ENCODE measurements at regions of chr1 and their contacts with region 1.

Region 1: GRCh38 chr1:147735423-147735822 is 25.0 kb downstream of the GJA5 start:
- DNase-seq: no peak
- ATAC-seq: no peak
- H3K4me3 ChIP-seq: no peak overlapping the region
- H3K27ac ChIP-seq: no peak overlapping the region
- H3K4me1 ChIP-seq: no peaks in the 10 kb centered on the region
- H3K27me3 ChIP-seq: no peaks in the 10 kb centered on the region
- CTCF ChIP-seq: no peak
- POLR2A ChIP-seq: no peak

Region 2: DNA sequence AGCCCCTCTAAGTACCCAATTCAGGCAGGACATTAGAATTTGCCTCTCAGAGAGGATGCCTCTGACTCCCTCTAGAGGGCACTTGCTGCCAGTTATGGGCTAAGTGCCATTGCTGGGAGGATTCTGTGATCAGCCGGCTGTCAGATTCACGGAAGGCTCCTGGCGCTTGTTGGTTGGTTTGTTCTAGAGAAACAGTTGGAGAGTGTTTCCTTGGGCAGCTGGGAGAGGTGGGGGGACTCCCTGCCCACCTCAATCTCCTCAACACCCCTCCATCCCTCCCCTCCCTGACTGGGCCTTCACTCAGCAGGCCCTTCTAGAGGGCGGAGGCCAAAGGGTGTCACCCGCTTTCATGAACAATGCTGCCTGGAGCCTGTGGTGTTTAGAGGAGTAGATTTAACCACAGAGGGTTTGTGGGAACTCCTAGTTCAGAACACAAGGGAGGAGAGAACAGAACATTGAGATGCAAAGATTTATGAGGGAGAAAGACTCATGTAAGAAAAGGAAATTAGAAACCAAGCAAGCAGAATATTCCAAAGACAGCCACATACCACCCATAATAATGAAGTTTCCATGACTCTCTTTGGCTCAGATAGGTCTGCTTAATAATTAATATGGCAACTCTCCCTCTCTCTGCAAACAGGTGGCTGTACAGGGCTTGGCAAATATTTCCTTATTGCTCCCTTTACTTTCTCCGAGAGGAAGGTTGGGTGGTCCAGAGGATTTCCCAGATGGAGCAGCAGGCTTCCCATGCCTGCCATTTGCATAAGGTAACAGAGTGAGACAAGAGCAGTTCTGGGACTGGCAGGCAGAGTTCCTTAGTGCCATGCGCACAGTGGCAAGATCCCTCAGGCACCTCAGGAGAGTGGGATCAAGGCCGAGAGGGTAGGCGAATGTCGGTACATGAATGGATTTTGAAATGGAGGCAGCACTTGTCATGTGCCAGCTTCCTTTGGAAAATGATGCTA is 35.1 kb before region 1 on chr1:
- in situ Hi-C with region 1: no loop called
- intact Hi-C with region 1: no loop called
- DNase-seq: peak; percentile 27 to 40
- ATAC-seq: peak; percentile 76 to 78
- H3K4me3 ChIP-seq: no peak overlapping the region
- H3K27ac ChIP-seq: no peak overlapping the region
- H3K4me1 ChIP-seq: no peaks in the 10 kb centered on the region
- H3K27me3 ChIP-seq: no peaks in the 10 kb centered on the region
- CTCF ChIP-seq: peak; percentile 49 to 80 (median 69)
- POLR2A ChIP-seq: no peak

Region 3: GRCh38 chr1:147882535-147882934 is 147.1 kb after region 1 on chr1:
- in situ Hi-C with region 1: loop called in 1 of 4 experiments (anchors 10 kb)
- intact Hi-C with region 1: no loop called
- DNase-seq: no peak
- ATAC-seq: no peak
- H3K4me3 ChIP-seq: no peak overlapping the region
- H3K27ac ChIP-seq: no peak overlapping the region
- H3K4me1 ChIP-seq: peaks cover 0 to 5% of the 10 kb centered on the region in 2 donors
- H3K27me3 ChIP-seq: no peaks in the 10 kb centered on the region
- CTCF ChIP-seq: no peak
- POLR2A ChIP-seq: no peak